ENCODE measurements at regions of chr3 and their contacts with region 1.

Region 1: DNA sequence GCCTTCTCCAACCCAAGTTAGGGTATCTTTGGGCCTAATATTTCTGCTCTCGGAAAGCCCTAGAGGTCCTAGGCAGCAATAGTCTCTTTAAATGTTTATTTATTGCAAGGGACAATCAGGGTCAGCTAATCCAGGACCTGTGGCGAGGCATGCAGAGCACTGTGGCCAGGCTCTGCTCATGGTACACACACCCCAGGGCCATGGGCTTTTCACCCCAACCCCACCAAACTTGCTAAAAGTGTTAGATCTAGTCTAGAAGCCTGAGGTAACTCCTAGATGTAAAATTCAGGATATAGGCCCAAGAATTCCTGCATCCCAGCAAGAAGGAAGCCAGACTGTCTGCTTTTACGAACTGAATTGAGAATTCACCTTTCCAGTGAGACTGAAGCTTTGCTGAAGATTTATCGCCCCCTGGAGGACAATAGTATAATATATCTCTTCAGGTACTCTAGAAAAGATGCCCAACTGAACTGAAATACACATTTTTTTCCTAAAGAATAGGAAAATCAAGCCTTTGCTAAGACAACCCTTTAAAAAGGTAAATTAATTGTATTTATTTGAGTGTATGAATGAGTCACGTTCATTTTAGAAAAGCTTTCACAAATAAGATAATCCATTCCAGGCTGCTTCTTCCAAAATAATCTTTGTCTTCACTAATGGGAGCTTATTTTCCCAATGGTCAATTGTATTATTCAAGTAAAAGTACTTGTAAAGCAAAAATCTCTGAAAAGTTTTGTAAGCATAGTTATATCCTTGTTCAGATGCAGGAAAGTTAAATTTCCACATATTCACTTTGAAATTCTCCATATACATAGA is 89.8 kb downstream of the LRRC3B start:
- DNase-seq: peak in 1 of 10 donors; percentile 72

Region 2: DNA sequence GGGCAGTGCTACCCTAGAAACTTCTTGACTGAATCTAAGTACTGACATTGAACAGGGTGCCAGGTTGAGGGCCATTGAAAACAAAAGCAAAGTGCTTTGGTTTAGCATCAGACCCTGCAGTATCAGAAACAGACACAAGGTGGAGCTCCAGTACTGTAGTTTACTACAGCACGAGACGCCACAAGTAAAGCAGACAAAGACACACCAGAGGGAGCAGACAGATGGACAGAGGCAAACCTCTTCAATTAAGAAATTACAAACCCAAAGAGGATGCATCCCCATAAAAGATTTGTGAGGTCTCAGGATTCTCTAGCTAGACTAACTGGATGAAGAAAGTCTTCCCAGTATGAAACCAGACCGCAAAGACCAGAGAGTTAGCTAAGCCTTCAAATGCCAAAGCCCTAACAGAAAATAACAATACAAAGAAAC is 1064.3 kb before region 1 on chr3:
- intact Hi-C with region 1: loop called (anchors 5 kb)
- DNase-seq: peak in 6 of 10 donors; percentile 22 to 75 (median 67)

Region 3: DNA sequence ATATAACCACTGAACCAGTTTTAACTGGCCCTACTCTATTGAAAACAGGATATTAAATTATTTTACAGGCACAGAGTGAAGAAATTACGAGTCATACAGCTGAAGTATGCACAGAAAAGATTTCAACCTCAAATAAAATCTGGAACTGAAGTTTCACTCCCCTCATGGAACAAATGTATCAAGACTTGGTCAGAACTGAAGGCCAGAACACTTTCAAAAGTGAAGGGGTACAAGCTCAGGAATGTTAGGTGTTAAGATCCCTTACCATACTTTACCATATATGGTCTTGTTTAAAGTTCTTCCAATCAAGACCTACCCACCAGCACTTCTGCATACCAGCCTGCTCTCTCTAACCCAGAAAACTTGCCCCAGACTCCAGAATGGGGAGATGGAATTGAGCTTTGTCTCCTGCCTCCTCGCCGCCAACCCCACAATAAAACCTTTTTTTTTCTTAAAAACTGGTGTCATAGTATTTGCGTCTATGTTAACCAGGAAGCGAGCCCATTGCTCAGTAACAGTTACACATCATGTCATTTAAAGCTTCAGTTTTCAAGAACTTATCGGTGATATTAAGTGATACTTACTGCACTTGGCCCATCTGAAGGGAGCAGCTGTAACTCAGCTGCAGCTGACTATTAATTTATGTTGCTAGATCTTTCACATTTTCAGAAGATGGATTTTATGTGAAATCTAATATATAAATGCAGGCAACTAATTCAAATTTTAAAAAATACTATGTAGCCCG is 862.6 kb before region 1 on chr3:
- intact Hi-C with region 1: loop called (anchors 5 kb)
- DNase-seq: no peak

Region 4: DNA sequence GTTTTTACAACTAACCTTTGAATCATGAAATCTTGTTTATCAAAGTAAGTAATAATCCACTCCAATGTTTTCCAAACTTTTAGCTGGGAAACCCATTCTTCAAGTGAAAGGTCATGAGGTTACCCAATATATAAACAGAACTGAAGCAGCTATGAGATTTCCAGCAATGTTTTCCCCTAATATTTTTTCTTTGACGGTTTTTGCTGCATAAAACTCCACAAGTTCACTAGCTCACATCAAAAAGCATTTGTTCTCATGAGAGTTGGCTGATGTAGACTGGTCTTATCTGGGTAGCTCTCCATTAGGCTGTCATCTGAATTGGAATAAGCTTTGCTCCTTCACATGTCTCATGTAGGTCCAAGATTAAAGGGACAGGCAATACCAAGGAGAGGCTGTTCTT is 331.0 kb before region 1 on chr3:
- intact Hi-C with region 1: no loop called
- DNase-seq: no peak

Region 5: DNA sequence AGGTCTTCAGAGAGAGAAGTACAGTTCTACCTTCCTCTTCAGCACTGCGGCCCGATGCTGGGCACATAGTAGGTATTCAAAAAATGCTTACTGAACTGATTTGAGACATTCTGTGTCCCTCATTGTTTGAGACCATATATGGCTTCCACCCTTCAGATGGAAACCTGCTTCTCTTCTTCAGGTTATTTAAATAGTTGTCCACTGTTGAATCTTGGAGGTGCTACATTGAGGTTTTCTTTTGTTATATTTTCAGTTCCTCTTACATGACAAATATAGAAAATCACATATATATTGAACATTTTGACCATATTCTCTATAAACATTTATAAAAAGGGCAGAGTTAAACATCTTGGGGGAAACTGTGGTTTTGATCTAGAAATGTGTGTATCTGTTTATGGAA is 290.0 kb before region 1 on chr3:
- intact Hi-C with region 1: no loop called
- DNase-seq: no peak

Region 6: GRCh38 chr3:26622621-26623418 is 89.6 kb before region 1 on chr3 and contains the start of gene LRRC3B:
- intact Hi-C with region 1: loop called (anchors 5 kb)
- DNase-seq: peak in 9 of 10 donors; percentile 33 to 91 (median 52)

Region 7: GRCh38 chr3:26636096-26636727 is 76.2 kb before region 1 on chr3:
- intact Hi-C with region 1: no loop called
- DNase-seq: no peak